ENCODE measurements at regions of chrX and their contacts with region 1.

Region 1: GRCh38 chrX:78945186-78945912 is at the start of gene P2RY10:
- DNase-seq: peak; percentile 10
- H3K4me3 Mint-ChIP-seq: peak within 1 kb of the TSS; percentile 94
- H3K27ac Mint-ChIP-seq: peak within 1 kb of the TSS; percentile 94
- H3K4me1 Mint-ChIP-seq: peaks cover 35% of the 10 kb centered on the region
- H3K27me3 Mint-ChIP-seq: no peaks in the 10 kb centered on the region
- total RNA-seq, gene P2RY10: 55.6 and 65.7 TPM in 2 replicates

Region 2: GRCh38 chrX:78321809-78322208 is 623.5 kb before region 1 on chrX:
- intact Hi-C with region 1: loop called (anchors 10 kb)
- DNase-seq: peak; percentile 38
- H3K4me3 Mint-ChIP-seq: peak overlapping the region; percentile 33
- H3K27ac Mint-ChIP-seq: peak overlapping the region; percentile 89
- H3K4me1 Mint-ChIP-seq: peaks cover 30% of the 10 kb centered on the region
- H3K27me3 Mint-ChIP-seq: no peaks in the 10 kb centered on the region

Region 3: GRCh38 chrX:78653118-78653822 is 292.1 kb before region 1 on chrX:
- intact Hi-C with region 1: loop called (anchors 10 kb)
- DNase-seq: no peak
- H3K4me3 Mint-ChIP-seq: peak overlapping the region; percentile 70
- H3K27ac Mint-ChIP-seq: peak overlapping the region; percentile 88
- H3K4me1 Mint-ChIP-seq: peaks cover 28% of the 10 kb centered on the region
- H3K27me3 Mint-ChIP-seq: no peaks in the 10 kb centered on the region

Region 4: GRCh38 chrX:78910010-78910409 is 35.3 kb before region 1 on chrX:
- intact Hi-C with region 1: no loop called
- DNase-seq: no peak
- H3K4me3 Mint-ChIP-seq: no peak overlapping the region
- H3K27ac Mint-ChIP-seq: no peak overlapping the region
- H3K4me1 Mint-ChIP-seq: no peaks in the 10 kb centered on the region
- H3K27me3 Mint-ChIP-seq: no peaks in the 10 kb centered on the region

Region 5: GRCh38 chrX:78931814-78932213 is 13.5 kb before region 1 on chrX:
- intact Hi-C with region 1: no loop called
- DNase-seq: no peak
- H3K4me3 Mint-ChIP-seq: no peak overlapping the region
- H3K27ac Mint-ChIP-seq: no peak overlapping the region
- H3K4me1 Mint-ChIP-seq: peaks cover 9% of the 10 kb centered on the region
- H3K27me3 Mint-ChIP-seq: no peaks in the 10 kb centered on the region

Region 6: DNA sequence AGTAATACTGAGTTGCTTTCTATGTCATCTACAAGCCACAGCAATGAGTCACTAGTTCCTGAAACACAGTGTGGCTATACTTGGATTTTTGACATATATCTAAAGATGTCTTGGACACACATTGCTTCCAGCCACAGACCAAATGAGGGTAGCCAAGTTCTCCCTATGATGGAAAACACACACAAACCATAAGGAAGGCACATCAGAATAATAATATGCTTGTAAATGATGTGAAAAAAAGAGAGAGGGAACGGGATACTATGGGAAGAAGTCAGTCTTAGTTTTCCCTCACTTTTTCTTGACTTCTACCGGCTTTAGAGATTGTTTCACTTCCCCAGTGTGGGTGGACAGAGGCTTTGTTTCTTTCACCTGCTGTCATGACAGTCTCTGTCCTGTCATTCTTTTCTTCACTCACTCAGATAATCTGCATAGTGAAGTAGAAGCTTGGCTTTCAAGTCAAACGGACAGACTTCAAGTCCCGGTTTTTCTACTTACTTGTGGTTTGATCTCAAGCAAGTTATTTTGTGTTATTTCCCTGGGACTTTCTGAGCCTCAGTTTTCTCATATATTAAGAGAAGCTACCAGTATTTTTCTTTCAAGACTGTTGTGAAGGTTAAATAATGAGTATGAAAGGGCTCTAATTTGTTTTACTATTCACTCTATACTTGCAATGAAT is 34.6 kb after region 1 on chrX:
- intact Hi-C with region 1: loop called (anchors 1 kb)
- DNase-seq: no peak
- H3K4me3 Mint-ChIP-seq: peak overlapping the region; percentile 69
- H3K27ac Mint-ChIP-seq: peak overlapping the region; percentile 100
- H3K4me1 Mint-ChIP-seq: peaks cover 22% of the 10 kb centered on the region
- H3K27me3 Mint-ChIP-seq: no peaks in the 10 kb centered on the region

Region 7: DNA sequence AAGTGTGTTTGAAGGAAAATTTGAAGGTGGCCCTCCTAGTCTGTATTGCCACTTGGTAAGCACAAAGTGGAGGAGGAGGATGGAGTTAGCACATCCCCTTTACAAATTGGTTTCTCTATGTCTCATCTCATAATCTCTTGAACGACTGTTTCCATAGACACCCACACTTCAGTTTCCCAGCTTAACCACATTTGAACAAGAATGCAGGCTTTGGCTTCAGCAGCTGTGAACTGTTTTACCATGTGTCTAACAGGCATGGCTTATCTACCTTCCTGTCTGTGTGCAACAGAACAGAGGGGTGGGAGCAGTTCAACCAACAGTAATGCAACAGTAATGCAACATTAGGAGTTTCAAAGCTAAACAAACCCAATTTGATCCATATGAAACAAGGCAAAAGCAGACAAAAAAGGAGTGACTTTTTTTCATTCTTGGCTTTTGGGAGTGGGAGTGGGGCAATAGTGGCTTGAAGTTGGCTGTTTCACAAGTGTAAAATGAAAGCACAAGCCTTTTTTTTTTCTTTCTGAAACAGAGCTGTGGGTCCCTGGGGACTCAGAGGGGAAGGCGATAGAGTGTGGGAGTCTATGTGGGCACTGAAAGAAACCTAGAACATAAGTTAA is 313.8 kb after region 1 on chrX:
- intact Hi-C with region 1: loop called (anchors 2 kb)
- DNase-seq: peak; percentile 60
- H3K4me3 Mint-ChIP-seq: peak overlapping the region; percentile 68
- H3K27ac Mint-ChIP-seq: peak overlapping the region; percentile 88
- H3K4me1 Mint-ChIP-seq: peaks cover 63% of the 10 kb centered on the region
- H3K27me3 Mint-ChIP-seq: no peaks in the 10 kb centered on the region

Measured in activated T-helper 2 cell treated with anti-CD3 and anti-CD28 coated beads, Interferon-gamma antibody, Interleukin-2, Interleukin-4, amounts not matched to agents 10 μg/mL and 5 μg/mL and 100 μg/mL, durations not matched to agents 14 hours and 24 hours and 36 hours (primary cell).